AG04449 (cell line): ENCODE measurements at regions of chr2 and their contacts with region 1.

Region 1: GRCh38 chr2:152846697-152847470 is 128.5 kb downstream of the ARL6IP6 start:
- DNase-seq: peak; percentile 71
- H3K4me3 ChIP-seq: no peak overlapping the region
- CTCF ChIP-seq: no peak

Region 2: GRCh38 chr2:152861349-152861942 is 14.6 kb after region 1 on chr2:
- CTCF ChIA-PET with region 1: interaction called, 45 read pairs
- POLR2A ChIA-PET with region 1: no interaction called
- DNase-seq: no peak
- H3K4me3 ChIP-seq: no peak overlapping the region
- CTCF ChIP-seq: peak; percentile 64

Region 3: GRCh38 chr2:152944099-152944498 is 97.2 kb after region 1 on chr2:
- CTCF ChIA-PET with region 1: no interaction called
- POLR2A ChIA-PET with region 1: no interaction called
- DNase-seq: no peak
- H3K4me3 ChIP-seq: no peak overlapping the region
- CTCF ChIP-seq: no peak